ENCODE measurements at regions of chr1 and their contacts with region 1.

Region 1: GRCh38 chr1:83931658-83932253 is 67.2 kb downstream of the TTLL7 start:
- DNase-seq: peak in 1 of 5 donors; percentile 13
- H3K4me3 ChIP-seq: no peak overlapping the region
- H3K27ac ChIP-seq: no peak overlapping the region
- H3K4me1 ChIP-seq: no peaks in the 10 kb centered on the region
- H3K27me3 ChIP-seq: no peaks in the 10 kb centered on the region
- CTCF ChIP-seq: peak; percentile 14 to 48 (median 32)
- EP300 ChIP-seq: no peak
- POLR2A ChIP-seq: no peak

Region 2: DNA sequence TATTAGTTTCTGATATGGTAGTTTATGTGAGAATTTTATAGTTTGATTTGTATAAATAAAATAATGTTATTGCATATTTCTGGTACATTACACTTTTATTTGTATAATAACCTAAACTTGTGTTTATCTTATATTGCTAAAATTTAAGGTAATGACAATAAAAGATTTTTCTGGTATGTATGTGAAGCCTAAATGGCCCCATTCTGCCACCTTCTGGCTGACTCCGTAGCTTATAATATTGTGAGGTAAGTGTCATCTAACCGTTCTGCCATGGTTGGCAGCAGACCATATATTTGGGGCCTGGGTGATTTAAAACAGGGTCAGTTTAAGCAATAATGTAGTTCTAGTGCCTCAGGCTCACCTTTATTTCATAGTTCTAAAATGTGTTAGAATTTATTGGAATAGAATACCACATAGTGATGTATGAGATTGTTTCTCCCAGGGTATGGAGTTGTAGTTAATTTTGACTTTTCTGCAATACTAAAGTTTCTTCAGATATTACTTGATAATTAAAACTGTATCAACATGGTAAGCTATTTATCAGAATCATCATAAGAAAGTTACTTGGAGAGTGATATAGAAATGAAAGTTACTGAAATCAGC is 191.1 kb after region 1 on chr1:
- intact Hi-C with region 1: loop called in 1 of 4 experiments (anchors 10 kb)
- DNase-seq: peak in 1 of 5 donors; percentile 16
- H3K4me3 ChIP-seq: no peak overlapping the region
- H3K27ac ChIP-seq: no peak overlapping the region
- H3K4me1 ChIP-seq: no peaks in the 10 kb centered on the region
- H3K27me3 ChIP-seq: no peaks in the 10 kb centered on the region
- CTCF ChIP-seq: peak in 1 of 3 donors; percentile 15
- EP300 ChIP-seq: no peak
- POLR2A ChIP-seq: no peak

Region 3: DNA sequence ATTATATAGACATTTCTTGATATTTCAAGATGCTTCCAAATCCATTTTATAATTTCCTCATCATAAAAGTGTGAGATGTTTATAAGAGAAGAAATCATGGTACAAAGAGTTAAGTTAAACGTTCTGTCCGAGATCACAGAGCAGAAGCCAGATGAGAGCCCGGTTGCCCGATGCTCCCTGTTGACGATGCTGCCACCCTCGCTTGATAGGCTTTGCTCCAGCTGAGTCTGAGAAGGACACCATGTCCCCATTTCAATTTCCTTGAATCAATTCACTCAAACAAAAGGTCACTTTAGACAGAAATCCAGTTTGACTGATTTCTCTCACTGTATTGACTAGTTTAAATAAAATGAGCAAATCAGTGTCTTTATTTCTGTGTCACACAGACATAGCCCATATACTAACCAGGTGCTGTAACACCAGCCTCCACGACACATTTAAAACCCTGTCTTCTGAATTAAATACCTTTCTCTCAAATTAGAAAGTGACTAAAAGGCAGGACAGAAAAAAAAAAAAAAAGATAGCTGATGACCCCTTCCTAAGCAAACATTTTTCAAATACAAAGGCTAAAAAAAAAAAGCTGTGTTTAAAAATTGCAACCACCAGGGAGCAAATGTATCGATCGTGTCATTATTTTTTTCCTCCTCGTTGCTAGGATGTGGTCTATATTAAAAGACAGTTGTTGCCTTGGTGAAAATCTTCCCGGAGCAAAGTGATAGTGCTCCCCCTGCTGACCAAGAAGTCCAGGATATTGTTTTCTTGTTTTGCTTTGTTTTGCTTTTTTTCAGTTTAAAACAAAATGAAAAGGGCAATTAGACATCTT is 501.7 kb after region 1 on chr1:
- intact Hi-C with region 1: loop called in 1 of 4 experiments (anchors 10 kb)
- DNase-seq: peak in 1 of 5 donors; percentile 42
- H3K4me3 ChIP-seq: no peak overlapping the region
- H3K27ac ChIP-seq: no peak overlapping the region
- H3K4me1 ChIP-seq: no peaks in the 10 kb centered on the region
- H3K27me3 ChIP-seq: no peaks in the 10 kb centered on the region
- CTCF ChIP-seq: peak; percentile 24 to 40 (median 37)
- EP300 ChIP-seq: no peak
- POLR2A ChIP-seq: no peak

Region 4: DNA sequence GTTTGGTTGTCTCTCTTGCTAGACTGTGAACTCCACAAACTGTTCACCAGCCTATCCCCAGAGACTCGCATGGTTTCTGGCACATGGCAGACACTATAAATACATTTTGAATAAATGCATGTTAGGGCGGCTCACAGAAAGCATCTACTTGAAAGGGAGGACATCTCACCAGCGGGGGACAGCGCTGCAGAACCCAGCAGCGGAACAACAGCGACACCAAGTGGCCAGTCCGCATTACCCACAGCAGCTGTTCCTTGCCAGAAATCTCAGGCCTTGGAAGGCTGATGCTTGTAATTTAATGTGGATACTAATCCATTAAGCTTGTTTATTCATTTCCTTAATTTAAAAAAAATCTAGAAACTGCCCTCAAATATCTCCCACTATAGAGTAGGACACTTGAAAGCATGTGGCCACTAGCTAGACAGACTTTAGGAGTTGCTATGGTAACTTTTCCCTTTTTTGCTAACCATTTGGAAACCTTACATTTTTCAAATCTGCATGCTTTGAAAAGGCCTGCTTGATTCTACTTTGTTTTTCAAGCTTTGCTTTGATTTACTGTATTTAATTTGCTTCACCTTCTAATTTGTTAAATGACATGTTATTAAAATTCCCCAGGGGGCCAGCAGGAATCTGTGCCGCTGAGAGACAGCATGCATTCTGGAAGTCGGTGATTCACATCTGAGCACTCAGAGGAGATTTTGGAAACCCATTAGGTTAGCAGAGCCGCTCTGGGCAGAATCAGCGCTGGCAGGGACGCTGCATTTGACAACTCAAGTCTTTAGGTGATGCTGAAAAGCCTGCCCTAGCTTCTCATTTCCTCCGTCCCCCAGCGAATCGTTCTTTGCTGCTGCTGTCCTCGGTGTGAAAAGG is 822.0 kb after region 1 on chr1:
- intact Hi-C with region 1: loop called in 2 of 4 experiments (anchors 10 kb)
- DNase-seq: peak; percentile 28 to 78 (median 71)
- H3K4me3 ChIP-seq: no peak overlapping the region
- H3K27ac ChIP-seq: no peak overlapping the region
- H3K4me1 ChIP-seq: no peaks in the 10 kb centered on the region
- H3K27me3 ChIP-seq: no peaks in the 10 kb centered on the region
- CTCF ChIP-seq: peak; percentile 46 to 64 (median 51)
- EP300 ChIP-seq: no peak
- POLR2A ChIP-seq: no peak

Region 5: GRCh38 chr1:84772428-84772943 is 840.7 kb after region 1 on chr1:
- intact Hi-C with region 1: loop called in 1 of 4 experiments (anchors 10 kb)
- DNase-seq: peak; percentile 72 to 84 (median 76)
- H3K4me3 ChIP-seq: no peak overlapping the region
- H3K27ac ChIP-seq: no peak overlapping the region
- H3K4me1 ChIP-seq: no peaks in the 10 kb centered on the region
- H3K27me3 ChIP-seq: no peaks in the 10 kb centered on the region
- CTCF ChIP-seq: peak; percentile 63 to 70 (median 66)
- EP300 ChIP-seq: no peak
- POLR2A ChIP-seq: no peak

Measured in ovary (tissue), 10 donors.